Heart left ventricle (tissue), 16 donors: ENCODE measurements at regions of chr2 and their contacts with region 1.

Region 1: GRCh38 chr2:11688222-11689069 is 18.5 kb upstream of the NTSR2 start:
- DNase-seq: peak; percentile 83 to 91 (median 86)
- ATAC-seq: peak; percentile 81 to 90 (median 88)
- H3K4me3 ChIP-seq: peak overlapping the region in 10 of 12 donors; percentile 3 to 41 (median 30)
- H3K27ac ChIP-seq: peak overlapping the region in 9 of 12 donors; percentile 2 to 77 (median 59)
- H3K4me1 ChIP-seq: peaks cover 0 to 36% (median 14%) of the 10 kb centered on the region in 12 donors
- H3K27me3 ChIP-seq: peaks cover 0 to 6% (median 0%) of the 10 kb centered on the region in 9 donors
- CTCF ChIP-seq: peak; percentile 78 to 97 (median 87)
- POLR2A ChIP-seq: no peak

Region 2: GRCh38 chr2:11477994-11478393 is 210.5 kb before region 1 on chr2:
- intact Hi-C with region 1: loop called in 3 of 10 experiments (anchors 10 kb)
- DNase-seq: peak; percentile 84 to 94 (median 86)
- ATAC-seq: peak; percentile 25 to 77 (median 62)
- H3K4me3 ChIP-seq: no peak overlapping the region
- H3K27ac ChIP-seq: no peak overlapping the region
- H3K4me1 ChIP-seq: peaks cover 0 to 10% (median 0%) of the 10 kb centered on the region in 12 donors
- H3K27me3 ChIP-seq: peaks cover 0 to 32% (median 0%) of the 10 kb centered on the region in 9 donors
- CTCF ChIP-seq: peak; percentile 80 to 97 (median 92)
- POLR2A ChIP-seq: no peak

Region 3: GRCh38 chr2:11743846-11744553 is 55.6 kb after region 1 on chr2:
- intact Hi-C with region 1: loop called in 2 of 10 experiments (anchors 5 kb)
- DNase-seq: peak; percentile 93 to 98 (median 94)
- ATAC-seq: peak; percentile 92 to 96 (median 93)
- H3K4me3 ChIP-seq: peak overlapping the region in 9 of 12 donors; percentile 1 to 44 (median 24)
- H3K27ac ChIP-seq: peak overlapping the region in 11 of 12 donors; percentile 11 to 84 (median 63)
- H3K4me1 ChIP-seq: peaks cover 9 to 53% (median 28%) of the 10 kb centered on the region in 12 donors
- H3K27me3 ChIP-seq: no peaks in the 10 kb centered on the region
- CTCF ChIP-seq: peak in 1 of 12 donors; percentile 5
- POLR2A ChIP-seq: peak in 1 of 2 donors; percentile 15

Region 4: GRCh38 chr2:11784747-11785610 is 96.5 kb after region 1 on chr2:
- intact Hi-C with region 1: loop called in 3 of 10 experiments (anchors 2 to 5 kb)
- DNase-seq: peak in 4 of 5 donors; percentile 33 to 52 (median 44)
- ATAC-seq: peak; percentile 29 to 72 (median 66)
- H3K4me3 ChIP-seq: peak overlapping the region in 10 of 12 donors; percentile 14 to 62 (median 42)
- H3K27ac ChIP-seq: no peak overlapping the region
- H3K4me1 ChIP-seq: peaks cover 0 to 7% (median 0%) of the 10 kb centered on the region in 12 donors
- H3K27me3 ChIP-seq: no peaks in the 10 kb centered on the region
- CTCF ChIP-seq: peak; percentile 84 to 99 (median 94)
- POLR2A ChIP-seq: no peak